AG04450 (cell line): ENCODE measurements at regions of chr15 and their contacts with region 1.

Region 1: GRCh38 chr15:65069179-65069578 is 1.4 kb upstream of the RASL12 start:
- DNase-seq: peak; percentile 99
- H3K4me3 ChIP-seq: no peak overlapping the region
- H3K27ac ChIP-seq: peak overlapping the region; percentile 91
- H3K27me3 ChIP-seq: peaks cover 9% of the 10 kb centered on the region
- CTCF ChIP-seq: no peak

Region 2: DNA sequence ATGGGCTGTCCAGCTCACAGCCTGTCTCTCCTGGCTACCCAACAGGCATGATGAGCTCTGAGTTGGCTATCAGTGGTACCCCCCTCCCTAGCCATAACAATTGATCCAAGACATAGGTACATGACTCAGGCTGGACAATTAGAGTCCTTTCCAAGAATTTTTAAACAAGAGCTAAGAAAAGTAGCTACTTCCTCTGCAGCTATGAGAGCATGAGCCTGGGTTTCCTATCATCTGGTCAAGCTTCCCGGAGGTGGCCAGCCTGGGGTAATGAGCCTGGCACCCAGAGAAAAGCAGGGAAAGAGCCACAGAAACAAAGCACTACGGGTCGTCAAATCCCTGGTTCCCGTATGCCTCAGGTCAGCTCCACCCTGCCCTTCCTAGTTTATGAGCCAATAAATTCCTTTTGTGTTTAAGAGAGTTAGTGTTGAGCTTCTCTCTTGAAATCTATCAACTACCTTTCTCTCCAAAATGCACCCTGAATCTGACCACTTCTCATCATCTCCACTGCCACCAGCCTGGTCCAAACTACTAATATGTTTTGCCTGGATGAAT is 26.3 kb before region 1 on chr15:
- CTCF ChIA-PET with region 1: no interaction called
- POLR2A ChIA-PET with region 1: interaction called, 12 read pairs
- DNase-seq: no peak
- H3K4me3 ChIP-seq: no peak overlapping the region
- H3K27ac ChIP-seq: no peak overlapping the region
- H3K27me3 ChIP-seq: no peaks in the 10 kb centered on the region
- CTCF ChIP-seq: no peak

Region 3: DNA sequence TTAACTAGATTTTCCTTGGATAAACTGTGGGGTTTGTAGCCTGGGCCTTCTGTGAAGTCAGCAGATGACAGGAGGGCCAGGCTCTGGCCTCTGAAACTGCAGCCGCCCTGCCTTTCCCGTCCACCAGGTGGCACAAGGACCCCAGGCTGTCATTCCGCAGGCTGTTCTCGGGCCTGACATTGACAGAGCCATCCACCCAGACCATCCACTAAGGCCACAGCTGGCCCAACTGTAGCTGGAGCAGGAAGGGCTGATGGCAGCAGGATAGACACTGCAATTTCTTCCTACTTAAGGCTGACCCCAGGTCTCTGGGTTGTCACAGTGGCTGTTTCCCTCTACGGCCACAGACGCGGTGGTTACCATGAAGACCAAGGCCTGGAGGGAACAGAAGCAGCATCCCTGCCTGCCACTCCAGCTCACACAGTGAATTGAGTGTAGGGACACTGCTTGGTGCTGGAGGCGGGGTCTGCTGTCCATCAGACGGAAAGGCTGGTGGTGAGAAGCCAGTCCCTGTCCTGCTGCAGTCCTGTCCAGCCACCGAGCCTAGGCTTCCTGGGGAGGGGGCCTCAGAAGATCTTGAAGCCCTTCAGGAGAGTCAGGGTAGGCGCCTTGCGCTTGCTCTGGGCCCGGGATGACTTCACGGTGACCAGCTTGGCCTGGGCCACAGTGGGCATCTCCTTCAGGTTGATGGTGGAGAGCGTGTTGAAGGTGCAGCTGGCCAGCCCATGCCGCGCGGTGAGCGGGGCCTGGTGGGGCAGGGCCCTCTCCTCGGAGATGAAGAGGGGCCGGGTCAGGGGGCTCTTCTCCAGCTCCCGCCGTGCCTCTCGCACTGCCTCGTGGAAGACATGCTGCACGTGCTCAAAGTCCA is 14.6 kb before region 1 on chr15:
- CTCF ChIA-PET with region 1: interaction called, 24 read pairs
- POLR2A ChIA-PET with region 1: interaction called, 16 read pairs
- DNase-seq: no peak
- H3K4me3 ChIP-seq: no peak overlapping the region
- H3K27ac ChIP-seq: no peak overlapping the region
- H3K27me3 ChIP-seq: peaks cover under 1% of the 10 kb centered on the region
- CTCF ChIP-seq: peak; percentile 99